Ascending aorta (tissue), 2 donors: ENCODE measurements at regions of chr1 and their contacts with region 1.

Region 1: GRCh38 chr1:154627257-154628120 is 19.5 kb upstream of the ADAR start:
- DNase-seq: peak; percentile 41 to 94
- H3K4me3 ChIP-seq: peak overlapping the region; percentile 85 to 98
- H3K27ac ChIP-seq: peak overlapping the region; percentile 95 to 97
- H3K4me1 ChIP-seq: peaks cover 0 to 9% of the 10 kb centered on the region in 2 donors
- H3K27me3 ChIP-seq: no peaks in the 10 kb centered on the region
- CTCF ChIP-seq: no peak

Region 2: GRCh38 chr1:154607609-154608396 is 19.7 kb before region 1 on chr1 and contains the start of gene ADAR:
- intact Hi-C with region 1: loop called (anchors 1 kb)
- DNase-seq: peak; percentile 68 to 97
- H3K4me3 ChIP-seq: peak within 1 kb of the TSS; percentile 73 to 95
- H3K27ac ChIP-seq: peak within 1 kb of the TSS; percentile 96
- H3K4me1 ChIP-seq: peaks cover 0 to 24% of the 10 kb centered on the region in 2 donors
- H3K27me3 ChIP-seq: no peaks in the 10 kb centered on the region
- CTCF ChIP-seq: no peak
- total RNA-seq, gene ADAR: 65.3 TPM

Region 3: DNA sequence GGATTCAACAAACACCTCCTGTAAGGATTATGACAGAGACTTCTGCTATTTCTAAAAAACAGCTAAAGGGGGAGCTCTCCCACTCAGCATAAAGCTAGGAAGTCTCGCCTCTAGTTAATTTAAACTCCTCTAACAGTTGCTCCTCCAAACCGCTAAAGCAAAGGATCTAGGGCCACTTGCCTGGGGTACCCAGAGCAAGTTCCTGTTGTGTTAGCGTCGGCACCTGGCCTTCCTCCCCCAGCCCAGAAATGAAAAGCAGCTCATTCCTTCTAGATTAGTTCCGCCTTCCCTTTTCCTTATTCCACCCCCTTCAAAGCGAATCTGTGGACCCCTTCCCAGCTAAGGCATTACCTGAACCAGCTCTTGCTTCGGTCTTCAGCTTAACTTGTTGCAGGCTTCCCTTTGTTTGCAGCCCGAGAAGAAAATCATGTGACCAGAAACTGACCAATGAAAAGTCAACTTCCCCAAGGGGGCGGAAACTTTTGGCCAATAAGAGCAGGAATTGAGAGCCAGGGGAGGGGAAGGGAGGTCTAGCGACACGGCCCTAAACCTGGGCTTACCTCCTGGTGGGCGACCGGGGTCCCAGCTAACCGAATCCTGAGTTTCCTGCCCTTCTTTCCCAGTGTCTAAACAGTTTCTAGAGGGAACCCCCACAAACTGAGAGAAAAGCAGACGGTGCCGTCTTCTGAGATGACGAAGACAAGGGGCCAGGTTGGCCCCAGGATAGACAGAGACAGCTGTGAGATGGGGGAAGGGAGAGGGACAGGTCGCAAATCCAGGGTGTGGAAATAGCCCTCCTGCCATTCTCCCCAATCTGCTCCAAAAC is 328.4 kb after region 1 on chr1 and contains the start of gene PBXIP1:
- intact Hi-C with region 1: no loop called
- DNase-seq: peak; percentile 52 to 93
- H3K4me3 ChIP-seq: peak within 1 kb of the TSS; percentile 68 to 70
- H3K27ac ChIP-seq: peak within 1 kb of the TSS; percentile 65 to 83
- H3K4me1 ChIP-seq: peaks cover 18 to 47% of the 10 kb centered on the region in 2 donors
- H3K27me3 ChIP-seq: no peaks in the 10 kb centered on the region
- CTCF ChIP-seq: peak in 2 of 3 experiments; percentile 15 to 26
- total RNA-seq, gene PBXIP1: 70.0 TPM